ENCODE measurements at regions of chr1 and their contacts with region 1.

Region 1: GRCh38 chr1:109099938-109100773 is 9.6 kb downstream of the TMEM167B start:
- DNase-seq: peak; percentile 93
- ATAC-seq: peak; percentile 88
- H3K4me3 Mint-ChIP-seq: peak overlapping the region; percentile 95
- H3K27ac Mint-ChIP-seq: peak overlapping the region; percentile 98
- H3K4me1 Mint-ChIP-seq: peaks cover 19% of the 10 kb centered on the region
- H3K27me3 Mint-ChIP-seq: no peaks in the 10 kb centered on the region
- CTCF ChIP-seq: peak; percentile 37

Region 2: GRCh38 chr1:108963052-108963686 is 137.0 kb before region 1 on chr1 and contains the start of gene CLCC1:
- CTCF ChIA-PET with region 1: interaction called, 4 read pairs
- POLR2A ChIA-PET with region 1: interaction called, 40 read pairs
- intact Hi-C with region 1: loop called (anchors 1 kb)
- DNase-seq: peak; percentile 84
- ATAC-seq: peak; percentile 94
- H3K4me3 Mint-ChIP-seq: peak within 1 kb of the TSS; percentile 88
- H3K27ac Mint-ChIP-seq: peak within 1 kb of the TSS; percentile 91
- H3K4me1 Mint-ChIP-seq: peaks cover 35% of the 10 kb centered on the region
- H3K27me3 Mint-ChIP-seq: no peaks in the 10 kb centered on the region
- CTCF ChIP-seq: no peak
- total RNA-seq, gene CLCC1: 19.5 and 28.3 TPM in 2 replicates

Region 3: DNA sequence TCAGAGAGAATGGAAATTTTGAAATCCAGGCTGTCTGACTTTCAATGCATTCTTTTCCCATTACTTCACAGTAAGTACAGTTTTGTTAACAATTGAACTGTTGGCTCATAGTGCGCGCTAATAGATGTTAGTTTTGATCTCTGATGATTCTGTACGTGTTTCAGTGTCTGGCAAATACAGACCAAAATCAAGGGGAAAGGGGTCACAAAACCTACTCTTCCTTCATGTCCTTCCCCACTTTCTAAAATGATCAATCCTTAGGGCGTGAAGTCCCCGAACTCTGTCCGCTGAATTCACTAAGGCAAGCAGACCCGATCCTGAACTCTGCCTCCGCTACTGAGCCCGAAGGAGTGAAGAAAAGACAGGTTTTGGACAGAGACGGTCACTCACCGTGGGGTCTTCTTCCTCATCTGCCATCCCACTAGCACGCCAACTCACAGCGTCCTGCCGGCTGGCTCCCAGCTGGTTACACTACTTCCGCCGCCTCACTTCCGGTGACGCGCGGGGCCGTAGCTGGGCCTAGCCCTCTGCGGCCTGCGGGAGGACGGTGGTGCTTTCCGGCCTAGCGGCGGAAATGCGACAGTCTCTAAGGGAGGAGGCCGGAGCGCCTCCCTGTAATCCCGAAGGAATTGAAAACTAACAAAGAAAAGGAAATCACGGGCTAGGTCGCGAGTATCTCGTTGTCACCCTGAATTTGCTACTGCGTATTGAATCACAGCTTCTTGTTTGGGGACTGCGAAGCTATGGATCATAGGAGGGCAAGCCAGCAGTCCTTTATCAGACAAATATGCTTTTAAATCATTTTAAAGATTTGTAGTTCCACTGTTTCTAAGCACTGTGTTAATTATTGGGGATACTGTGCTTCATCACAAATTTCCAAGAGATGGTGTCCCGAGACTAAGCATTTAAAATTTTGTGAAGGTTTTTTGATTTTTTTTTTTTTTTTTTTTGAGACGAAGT is 24.3 kb before region 1 on chr1 and contains the start of gene TAF13:
- CTCF ChIA-PET with region 1: interaction called, 20 read pairs
- POLR2A ChIA-PET with region 1: interaction called, 88 read pairs
- intact Hi-C with region 1: loop called (anchors 1 kb)
- DNase-seq: peak; percentile 92
- ATAC-seq: peak; percentile 99
- H3K4me3 Mint-ChIP-seq: peak within 1 kb of the TSS; percentile 97
- H3K27ac Mint-ChIP-seq: peak within 1 kb of the TSS; percentile 96
- H3K4me1 Mint-ChIP-seq: peaks cover 25% of the 10 kb centered on the region
- H3K27me3 Mint-ChIP-seq: no peaks in the 10 kb centered on the region
- CTCF ChIP-seq: no peak
- total RNA-seq, gene TAF13: 18.5 and 21.2 TPM in 2 replicates

Region 4: DNA sequence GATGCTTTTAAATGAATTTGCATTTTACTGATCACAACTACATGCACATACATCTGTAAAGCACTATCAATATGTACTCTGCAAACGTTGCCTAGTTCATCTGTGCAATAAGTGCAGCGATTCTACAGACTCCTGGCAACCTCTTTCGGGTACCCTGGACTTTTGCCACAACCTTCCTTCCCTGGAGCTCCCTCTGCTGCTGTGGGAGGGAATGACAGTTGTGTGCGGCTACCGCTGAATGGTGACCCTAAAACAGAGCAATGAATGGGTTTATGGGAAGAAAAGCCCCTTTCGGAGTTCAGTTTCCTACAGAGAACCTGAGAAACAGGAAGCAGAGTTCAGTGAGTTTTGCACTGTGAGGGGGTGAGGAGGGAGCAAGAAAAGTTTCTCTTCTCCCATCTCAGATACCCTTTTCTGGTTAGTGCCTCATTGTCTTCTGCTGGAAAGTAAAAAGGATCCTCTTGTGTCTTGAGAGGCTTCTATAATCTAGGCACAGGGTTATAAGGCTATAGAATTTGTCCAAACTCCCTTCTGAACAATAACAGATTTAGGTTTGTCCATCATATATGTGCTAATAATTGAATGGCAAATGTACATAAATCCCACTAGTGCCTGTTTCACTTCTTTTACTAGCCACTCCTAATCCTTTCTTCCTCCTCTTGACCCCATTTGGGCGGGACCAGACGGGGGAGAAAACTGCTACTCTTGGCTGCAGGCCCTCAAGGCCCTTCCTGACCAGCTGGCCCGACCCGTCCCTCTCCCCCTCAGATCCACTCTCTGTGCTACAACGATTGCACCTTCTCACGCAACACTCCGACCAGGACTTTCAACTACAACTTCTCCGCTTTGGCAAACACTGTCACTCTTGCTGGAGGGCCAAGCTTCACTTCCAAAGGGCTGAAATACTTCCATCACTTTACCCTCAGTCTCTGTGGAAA is 93.8 kb after region 1 on chr1:
- CTCF ChIA-PET with region 1: interaction called, 3 read pairs
- POLR2A ChIA-PET with region 1: interaction called, 9 read pairs
- intact Hi-C with region 1: loop called (anchors 1 kb)
- DNase-seq: peak; percentile 47
- ATAC-seq: peak; percentile 97
- H3K4me3 Mint-ChIP-seq: peak overlapping the region; percentile 19
- H3K27ac Mint-ChIP-seq: no peak overlapping the region
- H3K4me1 Mint-ChIP-seq: peaks cover 14% of the 10 kb centered on the region
- H3K27me3 Mint-ChIP-seq: no peaks in the 10 kb centered on the region
- CTCF ChIP-seq: no peak